ENCODE measurements at regions of chr1 and their contacts with region 1.

Region 1: GRCh38 chr1:27725374-27726173 is at the start of gene FAM76A:
- DNase-seq: peak; percentile 99
- H3K4me3 Mint-ChIP-seq: peak within 1 kb of the TSS; percentile 82
- H3K27ac Mint-ChIP-seq: peak within 1 kb of the TSS; percentile 95
- H3K4me1 Mint-ChIP-seq: peaks cover 23% of the 10 kb centered on the region
- H3K27me3 Mint-ChIP-seq: peaks cover 3% of the 10 kb centered on the region
- total RNA-seq, gene FAM76A: 16.8 to 18.9 TPM

Region 2: GRCh38 chr1:27455139-27455811 is 270.3 kb before region 1 on chr1:
- CTCF ChIA-PET with region 1: no interaction called
- POLR2A ChIA-PET with region 1: no interaction called
- DNase-seq: peak; percentile 50
- H3K4me3 Mint-ChIP-seq: peak overlapping the region; percentile 31
- H3K27ac Mint-ChIP-seq: peak overlapping the region; percentile 85
- H3K4me1 Mint-ChIP-seq: peaks cover 41% of the 10 kb centered on the region
- H3K27me3 Mint-ChIP-seq: no peaks in the 10 kb centered on the region

Region 3: GRCh38 chr1:27671964-27672749 is 53.4 kb before region 1 on chr1 and contains the start of gene IFI6:
- CTCF ChIA-PET with region 1: interaction called, 11 read pairs
- POLR2A ChIA-PET with region 1: interaction called, 4 read pairs
- DNase-seq: peak; percentile 92
- H3K4me3 Mint-ChIP-seq: peak within 1 kb of the TSS; percentile 98
- H3K27ac Mint-ChIP-seq: peak within 1 kb of the TSS; percentile 97
- H3K4me1 Mint-ChIP-seq: peaks cover 39% of the 10 kb centered on the region
- H3K27me3 Mint-ChIP-seq: no peaks in the 10 kb centered on the region
- total RNA-seq, gene IFI6: 231 to 321 TPM

Region 4: GRCh38 chr1:27772933-27773825 is 47.6 kb after region 1 on chr1 and contains the start of gene STX12:
- CTCF ChIA-PET with region 1: interaction called, 13 read pairs
- POLR2A ChIA-PET with region 1: interaction called, 4 read pairs
- DNase-seq: peak; percentile 100
- H3K4me3 Mint-ChIP-seq: peak within 1 kb of the TSS; percentile 97
- H3K27ac Mint-ChIP-seq: peak within 1 kb of the TSS; percentile 98
- H3K4me1 Mint-ChIP-seq: peaks cover 35% of the 10 kb centered on the region
- H3K27me3 Mint-ChIP-seq: no peaks in the 10 kb centered on the region
- total RNA-seq, gene STX12: 25.4 to 28.7 TPM